Caco-2 (cell line): ENCODE measurements at regions of chr19 and their contacts with region 1.

Region 1: GRCh38 chr19:43463381-43464136 is 1.8 kb downstream of the LYPD3 start:
- DNase-seq: peak; percentile 99
- H3K4me3 ChIP-seq: peak overlapping the region; percentile 64
- H3K4me3 Mint-ChIP-seq: peak overlapping the region; percentile 100
- H3K27ac Mint-ChIP-seq: peak overlapping the region; percentile 95
- H3K4me1 ChIP-seq: 0 out of 2 replicates have a peak, but pooled peaks cover 4% of the 10 kb centered on the region
- H3K4me1 Mint-ChIP-seq: peaks cover 7% of the 10 kb centered on the region
- H3K27me3 ChIP-seq: no peaks in the 10 kb centered on the region
- H3K27me3 Mint-ChIP-seq: no peaks in the 10 kb centered on the region
- CTCF ChIP-seq: no peak

Region 2: DNA sequence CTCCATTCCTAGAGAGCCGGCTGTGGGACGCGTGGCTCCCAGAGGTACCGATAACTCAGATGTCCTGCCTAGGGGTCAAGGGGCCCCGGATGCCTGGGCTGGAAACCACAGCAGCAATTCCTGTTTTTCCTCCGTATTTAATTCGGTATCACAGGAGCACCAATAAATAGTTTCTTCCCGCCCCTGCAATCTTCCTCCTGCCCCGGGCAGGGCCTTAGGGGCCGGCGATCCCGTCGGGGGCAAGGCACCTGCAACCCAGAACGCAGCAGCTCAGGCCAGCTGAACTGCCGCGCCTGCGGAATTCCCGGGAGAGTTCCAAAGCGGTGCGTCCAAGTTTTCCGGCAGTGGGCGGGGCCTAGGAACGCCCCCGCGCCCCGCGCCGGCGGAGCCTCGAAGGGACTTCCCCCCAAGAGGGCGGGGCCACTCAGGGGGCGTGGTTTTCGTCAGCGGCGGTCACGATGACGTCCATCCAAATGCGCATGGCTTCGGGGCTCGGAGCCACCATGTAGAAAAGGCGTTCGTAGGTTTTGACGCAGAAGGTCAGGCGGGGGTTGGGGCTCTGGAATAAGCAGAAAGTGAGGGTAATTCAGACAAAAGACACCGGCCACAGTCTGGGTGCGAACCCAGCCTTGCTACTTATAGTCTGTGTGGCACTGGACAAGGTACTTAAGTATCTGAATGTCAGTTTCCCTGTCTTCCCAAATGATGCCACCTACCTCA is 11.6 kb after region 1 on chr19:
- CTCF ChIA-PET with region 1: interaction called, 4 read pairs
- POLR2A ChIA-PET with region 1: interaction called, 5 read pairs
- intact Hi-C with region 1: loop called (anchors 1 kb)
- DNase-seq: peak; percentile 96 to 99
- H3K4me3 ChIP-seq: peak overlapping the region; percentile 30
- H3K4me3 Mint-ChIP-seq: peak overlapping the region; percentile 89
- H3K27ac Mint-ChIP-seq: peak overlapping the region; percentile 95
- H3K4me1 ChIP-seq: peaks cover 14% of the 10 kb centered on the region
- H3K4me1 Mint-ChIP-seq: peaks cover 6% of the 10 kb centered on the region
- H3K27me3 ChIP-seq: no peaks in the 10 kb centered on the region
- H3K27me3 Mint-ChIP-seq: no peaks in the 10 kb centered on the region
- CTCF ChIP-seq: no peak

Region 3: DNA sequence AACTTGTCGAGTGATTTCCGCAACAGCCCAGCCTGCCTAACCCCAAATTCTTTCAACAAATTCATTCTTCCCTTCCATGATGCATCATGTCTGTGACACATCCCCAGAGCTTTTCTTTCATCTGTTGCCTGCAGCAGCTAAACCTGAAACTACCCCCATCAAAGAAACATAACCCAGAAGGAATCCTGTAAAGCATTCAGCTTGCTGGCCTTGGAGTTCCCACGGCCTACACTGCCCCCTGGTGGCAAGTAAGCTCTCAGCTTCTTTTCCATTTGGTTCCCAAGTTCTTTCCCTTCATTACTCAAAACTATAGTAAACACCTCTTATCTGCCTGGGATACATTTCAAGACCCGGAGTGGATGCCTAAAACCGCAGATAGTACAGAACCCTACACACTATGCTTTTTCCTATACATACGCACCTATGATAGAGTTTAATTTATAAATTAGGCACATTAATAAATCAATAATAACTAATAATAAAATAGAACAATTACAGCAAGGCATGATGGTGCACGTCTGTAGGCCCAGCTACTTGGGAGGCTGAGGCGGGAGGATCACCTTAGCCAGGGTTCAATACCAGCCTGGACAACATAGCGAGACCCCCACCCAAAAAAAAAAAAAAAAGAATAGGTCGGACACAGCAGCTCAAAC is 56.0 kb after region 1 on chr19:
- CTCF ChIA-PET with region 1: interaction called, 19 read pairs
- POLR2A ChIA-PET with region 1: no interaction called
- intact Hi-C with region 1: no loop called
- DNase-seq: peak; percentile 83 to 89
- H3K4me3 ChIP-seq: no peak overlapping the region
- H3K4me3 Mint-ChIP-seq: no peak overlapping the region
- H3K27ac Mint-ChIP-seq: peak overlapping the region; percentile 35
- H3K4me1 ChIP-seq: peaks cover 12% of the 10 kb centered on the region
- H3K4me1 Mint-ChIP-seq: peaks cover 14% of the 10 kb centered on the region
- H3K27me3 ChIP-seq: no peaks in the 10 kb centered on the region
- H3K27me3 Mint-ChIP-seq: no peaks in the 10 kb centered on the region
- CTCF ChIP-seq: peak; percentile 91

Region 4: GRCh38 chr19:43532962-43533545 is 69.5 kb after region 1 on chr19 and contains the start of gene ZNF575:
- CTCF ChIA-PET with region 1: interaction called, 12 read pairs
- POLR2A ChIA-PET with region 1: no interaction called
- intact Hi-C with region 1: loop called (anchors 5 kb)
- DNase-seq: peak; percentile 95 to 96
- H3K4me3 ChIP-seq: peak within 1 kb of the TSS; percentile 60
- H3K4me3 Mint-ChIP-seq: peak within 1 kb of the TSS; percentile 96
- H3K27ac Mint-ChIP-seq: peak within 1 kb of the TSS; percentile 96
- H3K4me1 ChIP-seq: 0 out of 2 replicates have a peak, but pooled peaks cover 4% of the 10 kb centered on the region
- H3K4me1 Mint-ChIP-seq: peaks cover 6% of the 10 kb centered on the region
- H3K27me3 ChIP-seq: no peaks in the 10 kb centered on the region
- H3K27me3 Mint-ChIP-seq: no peaks in the 10 kb centered on the region
- CTCF ChIP-seq: peak in 1 of 2 experiments; percentile 9
- total RNA-seq, gene ZNF575: 1.00 and 1.2 TPM in 2 replicates

Region 5: DNA sequence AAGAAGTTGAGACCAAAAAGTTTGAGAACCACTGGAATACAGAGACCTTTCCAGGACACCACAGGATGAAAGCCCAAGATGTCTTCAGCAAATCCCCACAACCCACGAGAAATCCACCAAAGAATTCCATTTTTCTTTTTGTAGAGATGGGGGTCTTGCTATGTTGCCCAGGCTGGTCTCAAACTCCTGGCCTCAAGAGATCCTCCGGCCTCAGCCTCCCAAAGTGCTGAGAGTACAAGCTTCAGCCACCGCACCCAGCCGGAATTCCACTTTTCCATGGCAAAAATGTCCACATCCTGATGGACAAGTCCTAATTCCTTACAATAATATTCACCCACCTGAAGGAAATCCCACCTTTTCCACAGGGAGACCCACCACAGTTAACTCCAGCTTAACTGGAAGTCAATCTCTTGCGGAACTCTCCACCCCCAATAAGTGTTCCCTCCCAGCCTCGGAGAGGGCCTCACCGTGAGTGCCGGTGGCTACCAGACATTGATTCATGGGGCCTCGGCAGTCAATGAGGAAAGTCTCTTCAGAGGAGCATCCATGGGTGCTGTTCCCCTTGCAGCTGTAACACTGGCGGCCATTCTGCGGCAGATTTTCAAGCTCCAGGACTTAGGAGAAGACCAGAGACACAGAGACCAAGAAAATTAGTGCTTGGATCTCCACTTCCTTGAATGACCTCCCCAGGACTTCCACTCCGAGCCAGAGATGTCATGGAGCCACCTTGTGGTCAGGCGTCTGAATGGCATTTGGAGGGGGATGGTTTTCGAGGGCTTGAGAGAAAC is 188.4 kb after region 1 on chr19:
- CTCF ChIA-PET with region 1: no interaction called
- POLR2A ChIA-PET with region 1: no interaction called
- intact Hi-C with region 1: no loop called
- DNase-seq: peak; percentile 76 to 79
- H3K4me3 ChIP-seq: no peak overlapping the region
- H3K4me3 Mint-ChIP-seq: peak overlapping the region; percentile 37
- H3K27ac Mint-ChIP-seq: peak overlapping the region; percentile 36
- H3K4me1 ChIP-seq: no peaks in the 10 kb centered on the region
- H3K4me1 Mint-ChIP-seq: no peaks in the 10 kb centered on the region
- H3K27me3 ChIP-seq: no peaks in the 10 kb centered on the region
- H3K27me3 Mint-ChIP-seq: no peaks in the 10 kb centered on the region
- CTCF ChIP-seq: peak; percentile 79 to 94

Region 6: GRCh38 chr19:43700395-43701000 is 236.9 kb after region 1 on chr19:
- CTCF ChIA-PET with region 1: no interaction called
- POLR2A ChIA-PET with region 1: no interaction called
- intact Hi-C with region 1: no loop called
- DNase-seq: no peak
- H3K4me3 ChIP-seq: no peak overlapping the region
- H3K4me3 Mint-ChIP-seq: no peak overlapping the region
- H3K27ac Mint-ChIP-seq: no peak overlapping the region
- H3K4me1 ChIP-seq: peaks cover 12% of the 10 kb centered on the region
- H3K4me1 Mint-ChIP-seq: peaks cover 17% of the 10 kb centered on the region
- H3K27me3 ChIP-seq: no peaks in the 10 kb centered on the region
- H3K27me3 Mint-ChIP-seq: no peaks in the 10 kb centered on the region
- CTCF ChIP-seq: no peak